Calu3 (cell line): ENCODE measurements at regions of chr7 and their contacts with region 1.

Region 1: DNA sequence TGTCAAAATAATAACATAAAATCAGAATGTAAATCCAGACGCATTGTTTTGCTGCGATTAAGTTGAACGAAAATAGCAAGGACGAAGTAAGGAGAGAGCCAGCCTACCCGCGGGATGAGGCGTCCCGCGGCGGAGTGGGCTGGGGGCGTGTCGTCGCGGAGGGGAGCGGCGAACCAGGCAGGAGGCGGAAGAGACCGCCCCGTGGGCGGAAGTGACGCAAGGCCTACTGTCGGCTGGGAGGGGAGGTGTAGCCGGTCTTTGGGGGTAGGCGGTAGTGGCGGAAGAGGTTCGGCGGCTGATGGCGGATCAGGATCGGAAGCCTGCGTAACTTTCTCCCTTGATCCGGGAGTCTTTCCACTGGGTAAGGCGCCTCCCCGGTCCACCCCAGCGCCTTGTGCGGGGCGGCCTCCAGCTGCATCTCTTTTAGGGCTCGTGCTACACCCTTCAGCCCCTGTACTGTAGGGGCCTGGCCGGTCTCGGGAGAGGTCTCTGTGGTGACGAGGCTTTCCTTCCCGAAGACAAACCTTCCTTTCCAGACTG is at the start of gene TAX1BP1:
- DNase-seq: peak; percentile 99
- H3K4me3 Mint-ChIP-seq: peak within 1 kb of the TSS; percentile 95
- H3K27ac Mint-ChIP-seq: peak within 1 kb of the TSS; percentile 89
- H3K4me1 Mint-ChIP-seq: peaks cover 52% of the 10 kb centered on the region
- H3K27me3 Mint-ChIP-seq: no peaks in the 10 kb centered on the region
- CTCF ChIP-seq: no peak
- total RNA-seq, gene TAX1BP1: 190 TPM in 2 replicates

Region 2: GRCh38 chr7:27640914-27641580 is 98.9 kb before region 1 on chr7:
- CTCF ChIA-PET with region 1: interaction called, 3 read pairs
- intact Hi-C with region 1: loop called (anchors 5 kb)
- DNase-seq: peak; percentile 88
- H3K4me3 Mint-ChIP-seq: peak overlapping the region; percentile 50
- H3K27ac Mint-ChIP-seq: peak overlapping the region; percentile 76
- H3K4me1 Mint-ChIP-seq: peaks cover 68% of the 10 kb centered on the region
- H3K27me3 Mint-ChIP-seq: no peaks in the 10 kb centered on the region
- CTCF ChIP-seq: no peak